Vagina (tissue), 2 donors: ENCODE measurements at regions of chr1 and their contacts with region 1.

Region 1: DNA sequence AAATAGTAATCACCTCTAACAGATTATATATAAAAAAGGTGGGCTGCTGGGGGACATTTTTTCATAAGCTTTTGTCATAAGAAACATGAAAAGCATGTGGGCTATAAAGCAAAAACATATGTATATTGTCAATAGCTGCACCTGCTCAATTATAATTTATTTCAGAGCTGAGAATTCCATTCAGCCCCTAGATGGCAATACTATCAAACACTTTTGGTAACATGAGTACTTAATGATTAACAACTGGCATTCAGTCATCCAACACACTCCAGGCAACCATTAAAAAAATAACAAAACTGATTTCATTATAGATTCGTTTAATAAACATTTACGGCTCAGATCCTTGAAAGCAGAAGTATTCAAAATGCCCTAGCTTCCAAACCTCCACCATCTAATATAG is 115.1 kb downstream of the KCTD3 start:
- DNase-seq: no peak
- H3K4me3 ChIP-seq: no peak overlapping the region
- H3K27ac ChIP-seq: no peak overlapping the region
- H3K4me1 ChIP-seq: no peaks in the 10 kb centered on the region
- H3K27me3 ChIP-seq: no peaks in the 10 kb centered on the region
- CTCF ChIP-seq: no peak
- POLR2A ChIP-seq: no peak

Region 2: GRCh38 chr1:215710036-215710898 is 28.0 kb after region 1 on chr1:
- intact Hi-C with region 1: loop called (anchors 1 kb)
- DNase-seq: no peak
- H3K4me3 ChIP-seq: no peak overlapping the region
- H3K27ac ChIP-seq: no peak overlapping the region
- H3K4me1 ChIP-seq: no peaks in the 10 kb centered on the region
- H3K27me3 ChIP-seq: no peaks in the 10 kb centered on the region
- CTCF ChIP-seq: no peak
- POLR2A ChIP-seq: no peak